ENCODE measurements at regions of chr2 and their contacts with region 1.

Region 1: DNA sequence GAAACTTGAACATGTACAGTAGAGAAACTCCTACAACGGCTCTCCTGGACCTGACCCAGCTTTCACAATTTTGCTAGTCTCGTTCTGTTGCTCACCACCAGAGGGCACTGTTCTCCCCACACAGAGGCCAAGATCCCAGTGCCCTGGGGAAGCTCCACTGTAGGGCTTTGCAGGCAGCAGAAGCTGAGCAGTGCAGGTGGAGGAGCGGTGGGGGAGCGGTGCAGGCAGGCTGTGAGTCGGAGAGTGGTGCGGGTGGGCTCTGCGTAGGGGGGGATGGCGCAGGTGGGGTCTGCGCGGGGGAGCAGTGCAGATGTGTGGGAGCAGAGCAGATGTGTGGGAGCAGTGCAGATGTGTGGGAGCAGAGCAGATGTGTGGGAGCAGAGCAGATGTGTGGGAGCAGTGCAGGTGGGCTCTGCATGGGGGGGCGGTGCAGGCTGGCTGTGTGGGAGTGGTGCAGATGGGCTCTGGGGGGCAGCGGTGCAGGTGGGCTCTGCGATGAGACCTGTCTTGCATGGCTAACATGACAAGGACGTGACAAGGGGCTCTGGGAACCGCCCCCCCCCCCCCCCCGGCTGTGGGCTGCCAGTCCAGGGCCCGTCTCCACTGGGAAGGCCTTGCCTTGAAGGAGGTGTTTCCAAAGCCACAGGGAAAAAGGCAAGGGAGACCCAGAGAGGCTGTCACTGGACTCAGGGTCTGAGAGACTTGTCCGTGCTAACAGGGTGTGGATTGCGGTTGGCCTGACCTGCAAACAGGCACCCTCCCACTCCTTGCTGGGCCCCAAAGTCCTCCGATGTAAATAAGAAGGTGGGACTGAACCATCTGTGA is 7.3 kb downstream of the CYS1 start:
- DNase-seq: peak; percentile 78 to 79
- H3K4me3 ChIP-seq: no peak overlapping the region
- H3K27ac ChIP-seq: no peak overlapping the region
- H3K4me1 ChIP-seq: no peaks in the 10 kb centered on the region; the same call in 1 of the 2 replicates
- H3K27me3 ChIP-seq: peaks cover 14% of the 10 kb centered on the region
- CTCF ChIP-seq: peak; percentile 96

Region 2: DNA sequence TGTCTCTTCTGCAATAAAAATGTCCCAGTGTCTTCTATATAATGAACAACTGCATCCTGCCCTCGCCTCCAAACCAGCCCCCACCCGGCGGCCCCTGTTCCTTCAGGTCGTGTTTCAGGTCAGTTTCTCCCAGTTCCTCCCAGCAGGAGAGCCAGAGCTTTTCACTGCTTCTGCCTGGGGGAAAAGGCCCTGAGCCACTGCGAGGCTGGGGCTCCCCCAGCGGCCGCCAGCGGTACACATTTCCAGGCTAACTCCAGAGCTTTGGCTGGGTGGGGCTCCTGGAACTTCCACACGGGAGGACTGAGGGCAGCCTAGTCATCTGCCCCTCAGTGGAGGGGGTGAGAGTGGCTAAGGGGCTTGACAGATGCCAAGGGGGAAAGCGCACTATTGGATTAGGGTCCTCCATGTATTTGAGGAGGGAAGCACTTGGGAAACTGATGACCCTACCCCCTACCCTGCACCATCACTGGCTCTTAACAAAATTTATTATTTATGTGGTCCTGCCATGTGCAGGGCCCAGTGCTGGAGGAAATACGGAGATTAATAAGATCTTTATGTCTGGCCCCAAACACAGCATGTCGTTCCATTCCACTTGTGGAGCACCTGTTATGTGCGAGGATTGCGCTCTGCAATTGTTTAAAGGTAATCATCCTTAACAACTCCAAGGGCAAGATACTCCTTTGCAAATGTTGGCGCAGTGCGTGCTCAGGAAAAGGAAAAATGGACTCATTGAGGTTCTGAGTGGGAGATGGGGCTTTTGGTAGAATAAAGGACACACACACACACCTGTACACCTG is 24.7 kb after region 1 on chr2:
- CTCF ChIA-PET with region 1: interaction called, 15 read pairs
- POLR2A ChIA-PET with region 1: no interaction called
- intact Hi-C with region 1: no loop called
- DNase-seq: peak; percentile 61 to 63
- H3K4me3 ChIP-seq: no peak overlapping the region
- H3K27ac ChIP-seq: no peak overlapping the region
- H3K4me1 ChIP-seq: no peaks in the 10 kb centered on the region
- H3K27me3 ChIP-seq: no peaks in the 10 kb centered on the region
- CTCF ChIP-seq: peak; percentile 94

Region 3: DNA sequence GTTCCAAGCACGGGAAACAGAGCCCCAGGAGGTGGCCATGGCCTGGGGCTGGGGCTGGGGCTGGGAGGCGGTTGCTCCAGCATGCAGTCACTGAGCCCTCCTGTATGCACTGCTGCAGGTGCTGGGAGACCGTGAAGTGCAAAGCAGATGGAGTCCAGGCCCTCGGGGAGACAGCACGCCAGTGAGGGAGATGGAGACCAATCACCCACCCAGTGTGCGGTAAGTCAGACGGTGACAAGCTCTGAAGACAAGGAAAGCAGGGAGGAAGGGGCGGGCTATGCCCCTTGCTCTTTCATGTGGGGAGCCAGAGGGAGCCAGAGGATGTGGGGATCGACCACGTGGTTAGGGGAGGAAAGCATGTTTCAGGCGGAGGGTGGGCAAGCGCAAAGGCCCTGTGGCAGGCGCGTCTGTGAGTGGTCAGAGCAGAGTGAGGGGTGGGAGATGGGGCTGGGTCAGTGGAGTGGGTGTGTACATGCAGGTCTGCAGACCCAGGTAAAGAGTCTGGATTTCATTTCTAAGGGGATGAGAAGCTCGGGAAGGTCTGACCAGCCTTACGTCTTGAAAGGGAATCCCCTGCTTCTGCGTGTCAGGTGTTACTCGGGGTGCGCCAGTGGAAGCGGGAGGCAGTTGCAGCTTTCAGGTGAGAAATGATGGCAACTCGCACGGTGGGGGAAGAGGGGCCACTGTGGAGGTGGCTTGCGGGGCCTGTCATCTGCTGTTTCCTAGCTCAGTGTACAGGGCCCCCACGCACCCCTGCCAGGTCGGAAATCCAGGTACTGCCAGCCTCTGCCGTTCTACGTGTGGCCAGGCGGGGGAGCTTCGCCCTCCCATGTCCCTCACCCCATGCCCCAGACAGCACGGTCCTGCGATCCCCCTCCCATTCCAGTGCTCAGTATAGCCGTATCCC is 69.1 kb after region 1 on chr2:
- CTCF ChIA-PET with region 1: no interaction called
- POLR2A ChIA-PET with region 1: no interaction called
- intact Hi-C with region 1: no loop called
- DNase-seq: peak in 1 of 2 experiments; percentile 36
- H3K4me3 ChIP-seq: no peak overlapping the region
- H3K27ac ChIP-seq: no peak overlapping the region
- H3K4me1 ChIP-seq: no peaks in the 10 kb centered on the region
- H3K27me3 ChIP-seq: no peaks in the 10 kb centered on the region
- CTCF ChIP-seq: peak; percentile 73

Region 4: GRCh38 chr2:10302479-10303180 is 229.8 kb after region 1 on chr2 and contains the start of gene HPCAL1:
- CTCF ChIA-PET with region 1: no interaction called
- POLR2A ChIA-PET with region 1: interaction called, 19 read pairs
- intact Hi-C with region 1: no loop called
- DNase-seq: peak; percentile 85 to 96
- H3K4me3 ChIP-seq: peak within 1 kb of the TSS; percentile 92
- H3K27ac ChIP-seq: peak within 1 kb of the TSS; percentile 83
- H3K4me1 ChIP-seq: peaks cover 71% of the 10 kb centered on the region
- H3K27me3 ChIP-seq: no peaks in the 10 kb centered on the region
- CTCF ChIP-seq: peak; percentile 63
- total RNA-seq, gene HPCAL1: 91.1 and 105 TPM in 2 replicates

Region 5: GRCh38 chr2:10341193-10341592 is 268.3 kb after region 1 on chr2:
- CTCF ChIA-PET with region 1: no interaction called
- POLR2A ChIA-PET with region 1: interaction called, 14 read pairs
- intact Hi-C with region 1: no loop called
- DNase-seq: no peak
- H3K4me3 ChIP-seq: no peak overlapping the region
- H3K27ac ChIP-seq: no peak overlapping the region
- H3K4me1 ChIP-seq: peaks cover 13% of the 10 kb centered on the region; the same call in 1 of the 2 replicates
- H3K27me3 ChIP-seq: no peaks in the 10 kb centered on the region
- CTCF ChIP-seq: no peak

Region 6: DNA sequence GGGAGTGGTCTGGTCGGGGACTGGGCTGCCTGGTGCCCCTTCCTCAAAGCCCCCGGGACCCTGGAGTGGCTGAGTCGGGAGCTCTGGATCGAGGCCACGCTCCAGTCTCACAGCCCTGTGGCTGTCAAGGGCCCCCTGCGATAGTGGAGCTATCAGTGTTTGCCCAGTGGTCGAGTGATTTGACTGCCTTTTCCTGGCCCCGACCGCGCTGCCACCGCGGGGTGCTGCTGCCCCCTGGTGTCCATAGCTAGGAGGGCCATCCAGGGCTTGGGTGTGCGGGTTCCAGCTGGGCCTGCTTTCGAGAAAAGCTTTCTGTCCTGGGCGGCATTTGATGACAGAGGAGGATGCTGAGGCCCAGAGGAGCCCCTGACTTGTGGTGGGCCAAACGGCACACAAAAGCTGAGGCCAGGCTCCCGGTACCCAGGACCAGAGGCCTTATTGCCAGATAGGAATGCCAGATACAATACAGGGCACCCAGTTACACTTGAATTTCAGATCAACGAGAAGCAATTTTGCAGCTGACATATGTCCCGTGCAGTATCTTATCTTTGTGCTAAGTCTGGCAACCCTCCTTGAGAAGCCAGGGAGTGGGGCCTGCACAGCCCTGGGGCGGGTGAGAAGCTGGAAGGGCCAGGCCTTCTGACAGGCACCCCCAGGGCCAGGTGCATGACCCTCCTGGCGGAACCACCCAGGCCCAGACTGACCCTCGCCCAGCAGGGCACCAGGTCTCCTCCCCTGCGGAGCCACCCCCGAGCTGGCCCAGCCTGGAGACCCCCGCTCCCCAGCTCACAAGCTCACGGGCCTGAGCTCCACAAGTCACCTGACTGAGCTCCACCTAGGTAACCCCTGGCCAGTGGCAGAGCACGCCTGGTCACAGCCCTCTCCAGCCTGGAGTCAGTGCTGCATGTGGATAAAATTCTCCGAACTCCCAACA is 362.3 kb after region 1 on chr2:
- CTCF ChIA-PET with region 1: interaction called, 35 read pairs
- POLR2A ChIA-PET with region 1: no interaction called
- intact Hi-C with region 1: loop called (anchors 1 kb)
- DNase-seq: peak; percentile 62 to 84
- H3K4me3 ChIP-seq: no peak overlapping the region
- H3K27ac ChIP-seq: no peak overlapping the region
- H3K4me1 ChIP-seq: no peaks in the 10 kb centered on the region; the same call in 1 of the 2 replicates
- H3K27me3 ChIP-seq: no peaks in the 10 kb centered on the region
- CTCF ChIP-seq: peak; percentile 97

Region 7: DNA sequence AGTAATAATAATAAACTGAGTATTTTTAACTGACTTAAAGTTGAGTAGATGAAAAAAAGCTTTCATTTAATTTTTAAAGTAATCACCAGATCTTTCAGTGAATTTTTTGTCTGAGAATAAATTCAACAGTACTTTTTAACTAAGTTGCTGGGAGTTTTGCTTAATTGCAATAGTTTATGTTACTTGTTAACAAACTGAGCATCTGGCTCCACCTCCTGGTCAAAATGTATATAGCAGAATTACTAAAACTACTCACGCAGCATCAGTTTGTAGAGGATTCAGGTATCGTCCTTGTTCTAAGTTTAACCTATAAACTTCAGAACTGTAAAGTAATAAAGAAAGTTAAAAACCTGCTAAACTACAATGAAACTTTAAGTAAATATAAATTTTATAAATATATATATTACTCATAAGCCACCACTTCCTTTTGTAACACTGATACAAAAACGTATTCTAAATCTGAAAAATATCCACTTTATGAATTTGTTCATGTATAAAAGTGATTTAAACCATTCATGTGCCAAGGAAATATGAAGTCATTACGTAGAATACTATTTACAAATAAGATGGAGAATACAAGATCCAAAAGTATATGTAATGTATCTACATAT is 595.6 kb after region 1 on chr2:
- CTCF ChIA-PET with region 1: no interaction called
- POLR2A ChIA-PET with region 1: no interaction called
- intact Hi-C with region 1: loop called (anchors 2 kb)
- DNase-seq: peak in 1 of 2 experiments; percentile 58
- H3K4me3 ChIP-seq: no peak overlapping the region
- H3K27ac ChIP-seq: no peak overlapping the region
- H3K4me1 ChIP-seq: no peaks in the 10 kb centered on the region
- H3K27me3 ChIP-seq: no peaks in the 10 kb centered on the region
- CTCF ChIP-seq: peak; percentile 93

Region 8: DNA sequence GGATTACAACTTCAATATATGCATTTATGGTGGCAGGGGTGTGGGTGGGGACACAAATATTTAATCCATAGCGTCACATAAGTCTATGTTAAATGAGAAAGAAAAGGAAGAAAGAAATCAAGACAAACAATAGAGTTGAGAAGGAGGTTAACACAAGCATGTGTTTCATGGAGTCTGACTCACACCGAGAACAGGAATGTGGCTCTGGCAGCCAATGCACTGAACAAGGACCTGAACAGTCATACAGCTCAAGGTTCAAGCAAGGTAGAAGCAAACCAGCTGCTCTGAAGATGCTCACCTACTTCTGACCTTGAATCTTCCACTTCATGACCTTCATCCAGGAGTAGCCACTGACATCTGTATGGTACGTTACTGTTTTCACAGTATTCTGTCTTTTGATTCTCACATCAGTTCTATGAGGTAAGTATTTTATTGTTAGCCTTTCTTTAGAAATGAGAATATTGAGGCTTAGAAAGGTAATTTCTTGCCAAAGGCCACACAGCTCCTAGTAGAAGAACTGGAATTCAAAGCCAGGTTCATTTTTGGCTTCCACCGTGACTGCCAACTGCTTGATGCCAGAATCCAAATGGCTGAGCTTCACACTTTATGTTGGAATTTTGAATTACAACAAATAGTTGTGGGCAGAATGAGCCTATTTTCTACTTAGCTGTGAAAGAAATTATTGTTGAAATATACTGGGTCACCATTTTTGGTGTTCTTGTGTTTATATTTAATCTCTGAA is 1637.5 kb after region 1 on chr2:
- CTCF ChIA-PET with region 1: no interaction called
- POLR2A ChIA-PET with region 1: no interaction called
- intact Hi-C with region 1: no loop called
- DNase-seq: peak; percentile 59 to 96
- H3K4me3 ChIP-seq: no peak overlapping the region
- H3K27ac ChIP-seq: peak overlapping the region; percentile 80
- H3K4me1 ChIP-seq: peaks cover 72% of the 10 kb centered on the region
- H3K27me3 ChIP-seq: no peaks in the 10 kb centered on the region
- CTCF ChIP-seq: no peak